MCF 10A (cell line): ENCODE measurements at regions of chr1 and their contacts with region 1.

Region 1: GRCh38 chr1:169586395-169587255 is at the start of gene F5:
- DNase-seq: peak; percentile 79
- H3K4me3 Mint-ChIP-seq: peak within 1 kb of the TSS; percentile 45
- H3K27ac Mint-ChIP-seq: no peak within 1 kb of the TSS
- H3K4me1 Mint-ChIP-seq: no peaks in the 10 kb centered on the region
- H3K27me3 Mint-ChIP-seq: peaks cover 9% of the 10 kb centered on the region
- CTCF ChIP-seq: peak; percentile 35
- total RNA-seq, gene F5: 0.09 TPM in 1 of 2 replicates, not detected in the other

Region 2: DNA sequence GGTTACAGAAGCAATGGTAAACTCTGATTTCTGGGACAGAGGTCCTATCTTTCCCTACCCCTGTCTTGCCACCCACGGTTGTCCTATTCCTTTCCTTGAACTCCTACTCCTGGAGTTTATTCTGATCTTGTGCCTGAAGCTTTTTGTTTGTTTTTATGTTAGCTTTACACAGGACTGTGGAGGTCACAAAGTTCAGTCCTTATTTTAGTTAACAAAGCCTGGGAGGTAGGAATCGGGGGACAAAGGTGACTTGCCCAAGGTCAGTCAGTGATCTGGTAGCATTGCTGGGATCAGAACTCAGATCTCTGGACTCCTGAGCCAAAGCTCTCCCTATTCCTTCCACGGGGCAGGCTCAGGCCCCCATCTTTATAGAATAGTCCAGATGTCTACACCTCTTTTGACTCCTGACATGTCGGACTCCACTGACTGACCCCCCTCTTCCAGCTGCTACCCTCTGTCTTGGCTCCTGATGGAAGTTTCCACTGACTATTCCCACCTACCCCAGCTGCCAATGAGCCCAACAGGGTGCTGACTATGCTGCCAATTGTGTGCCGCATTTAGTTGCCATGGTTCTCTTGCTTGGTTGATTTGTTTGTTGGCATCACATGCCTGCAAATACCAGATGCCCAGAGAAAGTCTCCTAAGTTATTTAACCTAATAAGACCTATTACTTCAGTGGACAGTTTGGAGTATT is 10.2 kb before region 1 on chr1:
- CTCF ChIA-PET with region 1: interaction called, 11 read pairs
- POLR2A ChIA-PET with region 1: no interaction called
- intact Hi-C with region 1: no loop called
- DNase-seq: no peak
- H3K4me3 Mint-ChIP-seq: no peak overlapping the region
- H3K27ac Mint-ChIP-seq: no peak overlapping the region
- H3K4me1 Mint-ChIP-seq: no peaks in the 10 kb centered on the region
- H3K27me3 Mint-ChIP-seq: peaks cover 36% of the 10 kb centered on the region
- CTCF ChIP-seq: no peak

Region 3: DNA sequence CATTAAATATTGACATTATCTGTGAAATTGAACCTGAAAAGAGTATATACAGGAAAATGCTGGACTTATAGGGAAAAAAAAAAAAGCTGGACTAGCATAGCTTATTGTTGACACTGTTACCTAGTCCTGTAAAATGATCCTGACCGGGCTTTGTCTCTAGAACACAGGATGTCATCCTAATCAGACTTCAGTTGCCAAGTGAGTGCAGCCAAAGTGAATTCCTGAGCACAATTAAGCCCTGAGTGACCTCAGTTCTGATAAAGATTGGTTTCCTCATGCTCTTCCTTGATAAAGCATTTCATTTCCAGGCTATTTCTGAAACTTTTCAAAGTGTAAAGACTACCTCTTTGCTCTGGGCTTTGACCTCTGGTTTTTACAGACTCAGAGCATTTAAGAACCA is 23.5 kb after region 1 on chr1:
- CTCF ChIA-PET with region 1: interaction called, 13 read pairs
- POLR2A ChIA-PET with region 1: no interaction called
- intact Hi-C with region 1: no loop called
- DNase-seq: no peak
- H3K4me3 Mint-ChIP-seq: no peak overlapping the region
- H3K27ac Mint-ChIP-seq: no peak overlapping the region
- H3K4me1 Mint-ChIP-seq: no peaks in the 10 kb centered on the region
- H3K27me3 Mint-ChIP-seq: peaks cover 54% of the 10 kb centered on the region
- CTCF ChIP-seq: no peak